Aorta (tissue), 5 donors: ENCODE measurements at regions of chr12 and their contacts with region 1.

Region 1: DNA sequence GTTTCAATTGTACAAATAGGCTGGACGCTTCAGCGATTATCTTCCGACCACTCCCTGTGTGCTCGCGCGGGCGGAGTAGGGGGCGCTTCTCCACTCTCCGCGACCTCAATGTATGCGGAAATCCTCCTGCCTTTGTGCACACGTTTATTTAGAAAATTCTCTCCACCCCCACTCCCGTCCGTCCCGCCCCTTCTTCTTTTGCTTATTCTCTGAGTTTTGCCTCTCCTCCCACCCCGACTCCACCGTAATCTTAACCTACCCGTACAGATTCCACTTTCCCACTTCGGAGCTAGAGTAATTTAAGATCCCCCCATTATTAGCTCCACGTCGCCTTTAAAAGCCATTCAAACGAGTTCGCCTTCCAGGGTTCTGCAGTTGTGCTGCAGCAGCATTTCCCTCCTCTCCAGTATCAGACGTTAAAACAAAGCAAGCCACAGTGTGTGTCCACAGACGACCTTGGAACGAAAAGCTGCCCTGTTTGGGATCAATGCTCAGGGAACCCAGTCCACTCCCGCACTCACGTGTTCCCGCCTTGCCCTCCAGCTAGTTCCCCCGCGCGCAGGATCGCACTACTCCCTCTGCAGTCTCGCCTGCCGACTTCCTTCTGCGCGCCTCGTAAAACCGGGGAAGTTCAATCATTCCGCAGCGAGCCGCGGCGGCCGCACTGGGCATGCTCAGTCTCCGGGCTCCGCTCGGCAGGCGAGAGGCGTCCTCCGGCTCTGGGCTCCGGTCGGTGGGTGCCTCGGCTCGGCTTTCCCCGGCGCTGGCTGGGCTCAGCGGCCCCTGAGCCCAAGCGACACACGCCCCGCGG is at the start of gene ANO6:
- DNase-seq: peak; percentile 94 to 96
- ATAC-seq: peak; percentile 96
- H3K4me3 ChIP-seq: peak within 1 kb of the TSS; percentile 81 to 88
- H3K27ac ChIP-seq: peak within 1 kb of the TSS; percentile 65 to 91
- H3K4me1 ChIP-seq: peaks cover 0 to 4% of the 10 kb centered on the region in 2 donors
- H3K27me3 ChIP-seq: no peaks in the 10 kb centered on the region
- total RNA-seq, gene ANO6: 88.3 to 129 TPM

Region 2: GRCh38 chr12:45170456-45171042 is 45.1 kb before region 1 on chr12:
- intact Hi-C with region 1: loop called in 1 of 2 experiments (anchors 5 kb)
- DNase-seq: peak; percentile 84 to 91
- ATAC-seq: peak; percentile 81
- H3K4me3 ChIP-seq: no peak overlapping the region
- H3K27ac ChIP-seq: no peak overlapping the region
- H3K4me1 ChIP-seq: peaks cover 2% of the 10 kb centered on the region in 2 donors
- H3K27me3 ChIP-seq: no peaks in the 10 kb centered on the region

Region 3: GRCh38 chr12:45309836-45310626 is 94.4 kb after region 1 on chr12:
- intact Hi-C with region 1: loop called in 1 of 2 experiments (anchors 5 kb)
- DNase-seq: no peak
- ATAC-seq: peak; percentile 22
- H3K4me3 ChIP-seq: no peak overlapping the region
- H3K27ac ChIP-seq: peak overlapping the region; percentile 8 to 90
- H3K4me1 ChIP-seq: peaks cover 11 to 16% of the 10 kb centered on the region in 2 donors
- H3K27me3 ChIP-seq: no peaks in the 10 kb centered on the region

Region 4: GRCh38 chr12:45388545-45388944 is 172.9 kb after region 1 on chr12:
- intact Hi-C with region 1: loop called (anchors 1 to 10 kb)
- DNase-seq: no peak
- ATAC-seq: peak; percentile 65
- H3K4me3 ChIP-seq: no peak overlapping the region
- H3K27ac ChIP-seq: no peak overlapping the region
- H3K4me1 ChIP-seq: peaks cover 0 to 2% of the 10 kb centered on the region in 2 donors
- H3K27me3 ChIP-seq: no peaks in the 10 kb centered on the region

Region 5: GRCh38 chr12:45728630-45729232 is 513.1 kb after region 1 on chr12:
- intact Hi-C with region 1: loop called (anchors 5 to 10 kb)
- DNase-seq: peak; percentile 98
- ATAC-seq: peak; percentile 93
- H3K4me3 ChIP-seq: peak overlapping the region; percentile 72 to 99
- H3K27ac ChIP-seq: peak overlapping the region; percentile 94 to 97
- H3K4me1 ChIP-seq: no peaks in the 10 kb centered on the region
- H3K27me3 ChIP-seq: no peaks in the 10 kb centered on the region